Pancreas (tissue), 10 donors: ENCODE measurements at regions of chr1 and their contacts with region 1.

Region 1: GRCh38 chr1:222288040-222288439 is 259.9 kb downstream of the HHIPL2 start:
- DNase-seq: no peak
- ATAC-seq: peak in 1 of 4 donors; percentile 53
- H3K4me3 ChIP-seq: no peak overlapping the region
- H3K27ac ChIP-seq: no peak overlapping the region
- H3K4me1 ChIP-seq: no peaks in the 10 kb centered on the region
- H3K27me3 ChIP-seq: no peaks in the 10 kb centered on the region
- CTCF ChIP-seq: no peak

Region 2: DNA sequence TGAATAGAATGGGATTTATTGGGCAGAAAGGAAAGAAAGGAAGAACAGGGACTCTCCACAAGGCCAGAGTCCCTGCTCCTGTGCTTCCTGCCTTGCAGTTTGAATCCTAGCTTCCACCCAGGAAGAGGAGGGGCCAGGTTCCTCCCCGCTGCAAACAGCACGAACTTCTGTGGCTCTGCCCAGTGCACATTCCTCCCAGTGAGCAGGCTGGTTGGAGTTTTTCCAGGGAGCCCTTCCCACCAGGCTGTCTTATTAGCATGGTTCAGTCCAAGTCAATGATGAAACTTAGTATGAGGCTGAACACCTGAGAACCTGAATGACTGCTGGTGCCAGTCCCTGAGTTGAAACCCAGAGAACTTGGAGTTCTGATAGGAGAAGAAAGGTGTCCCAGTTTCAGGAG is 793.4 kb before region 1 on chr1:
- intact Hi-C with region 1: loop called in 1 of 3 experiments (anchors 10 kb)
- DNase-seq: peak; percentile 3 to 55 (median 50)
- ATAC-seq: peak in 2 of 4 donors; percentile 22 to 66
- H3K4me3 ChIP-seq: no peak overlapping the region
- H3K27ac ChIP-seq: no peak overlapping the region
- H3K4me1 ChIP-seq: no peaks in the 10 kb centered on the region
- H3K27me3 ChIP-seq: no peaks in the 10 kb centered on the region
- CTCF ChIP-seq: no peak